AG04450 (cell line): ENCODE measurements at regions of chr13 and their contacts with region 1.

Region 1: GRCh38 chr13:113274213-113274575 is 22.8 kb upstream of the LAMP1 start:
- DNase-seq: no peak
- H3K4me3 ChIP-seq: no peak overlapping the region
- H3K27ac ChIP-seq: peak overlapping the region; percentile 31
- H3K27me3 ChIP-seq: no peaks in the 10 kb centered on the region
- CTCF ChIP-seq: no peak

Region 2: GRCh38 chr13:112350300-112350699 is 923.9 kb before region 1 on chr13:
- CTCF ChIA-PET with region 1: no interaction called
- POLR2A ChIA-PET with region 1: no interaction called
- DNase-seq: no peak
- H3K4me3 ChIP-seq: no peak overlapping the region
- H3K27ac ChIP-seq: no peak overlapping the region
- H3K27me3 ChIP-seq: no peaks in the 10 kb centered on the region
- CTCF ChIP-seq: no peak

Region 3: GRCh38 chr13:113288880-113289279 is 14.7 kb after region 1 on chr13:
- CTCF ChIA-PET with region 1: interaction called, 3 read pairs
- POLR2A ChIA-PET with region 1: interaction called, 10 read pairs
- DNase-seq: no peak
- H3K4me3 ChIP-seq: no peak overlapping the region
- H3K27ac ChIP-seq: no peak overlapping the region
- H3K27me3 ChIP-seq: peaks cover 16% of the 10 kb centered on the region
- CTCF ChIP-seq: no peak